Activated CD4-positive, alpha-beta T cell treated with anti-CD3 and anti-CD28 coated beads for 36 hours (primary cell): ENCODE measurements at regions of chr2 and their contacts with region 1.

Region 1: GRCh38 chr2:118186110-118186857 is 98.0 kb downstream of the INSIG2 start:
- DNase-seq: peak; percentile 94
- ATAC-seq: peak; percentile 91
- H3K4me3 Mint-ChIP-seq: peak overlapping the region; percentile 87
- H3K27ac Mint-ChIP-seq: peak overlapping the region; percentile 98
- H3K4me1 Mint-ChIP-seq: peaks cover 14% of the 10 kb centered on the region
- H3K27me3 Mint-ChIP-seq: no peaks in the 10 kb centered on the region

Region 2: DNA sequence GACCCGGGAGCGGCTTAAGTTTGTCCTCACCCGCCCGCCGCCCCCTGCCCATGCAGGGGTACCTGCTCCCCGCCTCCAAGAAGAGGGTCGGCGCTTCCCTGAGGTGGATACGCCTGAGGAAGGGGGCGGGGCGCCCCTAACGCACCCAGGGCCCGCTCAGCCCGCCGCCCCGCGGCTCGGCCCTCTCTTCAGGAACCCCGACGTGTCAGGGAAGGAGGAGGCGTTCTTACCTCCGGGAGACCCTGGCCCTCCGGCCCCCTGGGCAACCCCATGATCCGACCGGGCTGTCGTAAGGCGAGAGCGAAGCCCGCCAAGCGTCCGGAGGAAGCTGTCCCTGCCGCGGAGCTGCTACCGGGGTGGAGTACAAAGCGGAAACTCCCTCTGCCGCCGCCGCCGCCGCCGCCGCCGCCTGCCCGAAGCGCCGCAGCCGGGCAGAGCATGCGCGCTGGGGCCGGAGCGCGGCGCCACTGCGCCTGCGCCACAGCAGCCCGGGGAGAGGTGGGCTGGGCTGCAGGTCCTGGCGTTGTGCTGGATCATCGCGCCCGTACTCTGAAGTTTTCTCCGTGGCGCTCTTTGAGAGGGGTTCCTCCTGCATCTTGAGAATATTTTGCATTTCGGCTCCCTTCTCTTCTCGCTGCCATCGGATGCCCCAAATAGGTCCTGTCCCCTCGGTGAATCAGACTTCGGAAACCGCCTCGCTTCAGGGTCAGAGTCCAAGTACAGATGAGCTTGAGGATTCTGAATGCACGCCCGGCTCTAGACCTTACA is 172.4 kb before region 1 on chr2 and contains the start of gene CCDC93:
- CTCF ChIA-PET with region 1: no interaction called
- POLR2A ChIA-PET with region 1: no interaction called
- intact Hi-C with region 1: loop called in 1 of 2 experiments (anchors 1 kb)
- DNase-seq: peak; percentile 90
- ATAC-seq: peak; percentile 89
- H3K4me3 Mint-ChIP-seq: peak within 1 kb of the TSS; percentile 85
- H3K27ac Mint-ChIP-seq: peak within 1 kb of the TSS; percentile 87
- H3K4me1 Mint-ChIP-seq: peaks cover 42% of the 10 kb centered on the region
- H3K27me3 Mint-ChIP-seq: no peaks in the 10 kb centered on the region
- total RNA-seq, gene CCDC93: 26.2 to 39.5 TPM

Region 3: GRCh38 chr2:118103951-118104940 is 82.0 kb before region 1 on chr2:
- CTCF ChIA-PET with region 1: no interaction called
- POLR2A ChIA-PET with region 1: no interaction called
- intact Hi-C with region 1: loop called in 1 of 2 experiments (anchors 5 kb)
- DNase-seq: no peak
- ATAC-seq: peak; percentile 78
- H3K4me3 Mint-ChIP-seq: no peak overlapping the region
- H3K27ac Mint-ChIP-seq: no peak overlapping the region
- H3K4me1 Mint-ChIP-seq: peaks cover 34% of the 10 kb centered on the region
- H3K27me3 Mint-ChIP-seq: no peaks in the 10 kb centered on the region

Region 4: DNA sequence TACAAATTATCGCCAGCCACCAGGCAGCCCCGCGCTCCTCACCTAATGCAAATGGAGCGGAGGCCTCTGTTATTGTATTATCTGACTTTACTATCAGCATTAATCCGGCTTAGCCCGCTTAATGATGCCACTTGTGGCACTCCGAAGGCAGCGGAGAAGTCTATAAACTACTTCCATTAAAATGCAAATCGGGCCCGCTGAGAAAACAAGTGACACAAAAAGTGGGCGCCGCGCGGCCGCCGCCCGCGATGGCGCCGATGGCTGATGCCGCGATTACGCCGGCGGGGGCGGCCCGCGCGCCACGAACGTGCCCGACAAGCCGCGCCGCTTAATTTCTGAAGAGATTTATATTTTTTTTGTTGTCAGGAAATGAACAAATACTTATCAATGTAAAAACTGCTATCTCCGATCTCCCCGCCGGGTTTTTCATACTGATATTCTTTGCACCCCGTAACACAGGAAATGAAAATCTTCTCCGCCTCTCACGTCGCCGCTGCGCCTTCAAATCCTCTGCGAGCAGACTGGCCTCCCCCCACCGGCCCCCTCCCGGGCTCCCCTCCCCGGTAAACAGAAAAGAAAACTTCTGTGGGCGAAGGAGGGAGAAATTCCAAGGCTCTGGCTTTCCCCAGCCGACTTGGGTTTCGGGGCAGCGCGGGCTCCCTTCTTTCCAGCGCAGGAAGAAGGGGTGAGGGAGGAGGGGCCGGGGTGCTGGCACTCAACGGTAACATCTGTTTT is 123.8 kb after region 1 on chr2:
- CTCF ChIA-PET with region 1: no interaction called
- POLR2A ChIA-PET with region 1: no interaction called
- intact Hi-C with region 1: loop called (anchors 1 to 5 kb)
- DNase-seq: peak; percentile 83
- ATAC-seq: peak; percentile 86
- H3K4me3 Mint-ChIP-seq: peak overlapping the region; percentile 76
- H3K27ac Mint-ChIP-seq: peak overlapping the region; percentile 93
- H3K4me1 Mint-ChIP-seq: peaks cover 7% of the 10 kb centered on the region
- H3K27me3 Mint-ChIP-seq: no peaks in the 10 kb centered on the region